PC-9 (cell line): ENCODE measurements at regions of chr2 and their contacts with region 1.

Region 1: DNA sequence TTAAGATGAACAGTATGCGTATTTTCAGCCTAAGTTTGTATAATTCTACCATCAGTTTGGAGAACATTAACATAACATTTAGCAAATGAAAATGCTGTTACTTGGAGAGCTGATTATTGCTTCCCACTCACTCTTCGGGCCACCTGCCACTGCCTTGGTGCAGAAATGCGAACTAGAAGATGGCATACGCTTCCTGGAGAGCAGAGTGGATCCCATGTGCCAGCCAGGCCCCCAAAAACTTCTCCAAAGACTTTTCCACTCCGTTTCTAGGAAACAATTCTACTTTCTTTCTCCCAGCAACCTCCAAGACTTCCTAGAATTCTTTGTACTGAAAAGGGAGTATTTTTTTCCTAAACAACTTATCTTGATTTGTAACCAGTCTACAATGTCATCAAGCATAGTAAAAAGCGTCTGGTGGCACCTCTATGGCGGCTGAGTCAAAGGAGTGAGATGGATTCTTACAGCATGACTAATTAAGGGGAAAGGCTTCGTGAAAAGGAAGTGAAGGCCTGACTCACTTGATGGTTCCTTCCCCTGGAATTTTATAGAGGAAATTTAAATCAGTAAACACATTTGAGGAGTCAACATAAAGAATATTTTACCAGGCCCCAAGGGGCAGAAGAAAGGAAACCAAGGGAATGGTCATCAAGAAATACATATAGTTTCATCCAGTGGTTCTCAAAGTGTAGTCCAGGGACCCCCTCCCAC is 36.6 kb downstream of the FEZ2 start:
- DNase-seq: peak; percentile 69 to 99
- H3K4me3 ChIP-seq: peak overlapping the region; percentile 30; the same call in 1 of the 2 replicates
- H3K27ac ChIP-seq: peak overlapping the region; percentile 99
- H3K4me1 ChIP-seq: peaks cover 49% of the 10 kb centered on the region
- H3K27me3 ChIP-seq: no peaks in the 10 kb centered on the region
- CTCF ChIP-seq: no peak

Region 2: DNA sequence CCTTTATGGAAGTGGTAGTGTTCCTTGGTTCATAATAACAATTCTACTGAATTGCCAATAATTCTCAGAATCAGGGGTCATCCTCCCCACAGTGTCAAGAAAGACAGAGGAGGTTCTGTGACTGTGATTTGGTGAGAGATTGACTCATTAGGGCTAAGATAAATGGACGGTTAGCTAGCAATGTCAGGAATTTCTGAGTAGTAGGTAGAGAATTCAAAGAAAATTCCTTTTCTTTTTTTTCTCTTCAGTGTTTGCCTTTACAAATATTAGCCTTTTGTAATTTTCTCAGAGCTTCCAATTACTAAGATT is 222.6 kb before region 1 on chr2:
- CTCF ChIA-PET with region 1: no interaction called
- POLR2A ChIA-PET with region 1: interaction called, 13 read pairs
- intact Hi-C with region 1: loop called (anchors 5 kb)
- DNase-seq: peak in 1 of 2 experiments; percentile 93
- H3K4me3 ChIP-seq: no peak overlapping the region
- H3K27ac ChIP-seq: peak overlapping the region; percentile 51
- H3K4me1 ChIP-seq: peaks cover 27% of the 10 kb centered on the region
- H3K27me3 ChIP-seq: no peaks in the 10 kb centered on the region
- CTCF ChIP-seq: no peak

Region 3: GRCh38 chr2:36376319-36376765 is 185.0 kb before region 1 on chr2:
- CTCF ChIA-PET with region 1: no interaction called
- POLR2A ChIA-PET with region 1: no interaction called
- intact Hi-C with region 1: loop called (anchors 5 kb)
- DNase-seq: peak; percentile 29 to 37
- H3K4me3 ChIP-seq: no peak overlapping the region
- H3K27ac ChIP-seq: peak overlapping the region; percentile 88
- H3K4me1 ChIP-seq: peaks cover 98% of the 10 kb centered on the region
- H3K27me3 ChIP-seq: no peaks in the 10 kb centered on the region
- CTCF ChIP-seq: no peak

Region 4: GRCh38 chr2:36486546-36487044 is 74.8 kb before region 1 on chr2:
- CTCF ChIA-PET with region 1: no interaction called
- POLR2A ChIA-PET with region 1: interaction called, 6 read pairs
- intact Hi-C with region 1: loop called (anchors 2 kb)
- DNase-seq: peak; percentile 15 to 89
- H3K4me3 ChIP-seq: no peak overlapping the region
- H3K27ac ChIP-seq: peak overlapping the region; percentile 42
- H3K4me1 ChIP-seq: peaks cover 72% of the 10 kb centered on the region
- H3K27me3 ChIP-seq: no peaks in the 10 kb centered on the region
- CTCF ChIP-seq: no peak

Region 5: GRCh38 chr2:36586672-36587071 is 25.3 kb after region 1 on chr2:
- CTCF ChIA-PET with region 1: no interaction called
- POLR2A ChIA-PET with region 1: interaction called, 14 read pairs
- intact Hi-C with region 1: no loop called
- DNase-seq: no peak
- H3K4me3 ChIP-seq: no peak overlapping the region
- H3K27ac ChIP-seq: no peak overlapping the region
- H3K4me1 ChIP-seq: no peaks in the 10 kb centered on the region
- H3K27me3 ChIP-seq: no peaks in the 10 kb centered on the region
- CTCF ChIP-seq: no peak

Region 6: GRCh38 chr2:36663851-36664695 is 102.7 kb after region 1 on chr2:
- CTCF ChIA-PET with region 1: interaction called, 8 read pairs
- POLR2A ChIA-PET with region 1: no interaction called
- intact Hi-C with region 1: loop called (anchors 5 kb)
- DNase-seq: peak; percentile 25 to 71
- H3K4me3 ChIP-seq: no peak overlapping the region
- H3K27ac ChIP-seq: no peak overlapping the region
- H3K4me1 ChIP-seq: peaks cover 18% of the 10 kb centered on the region
- H3K27me3 ChIP-seq: no peaks in the 10 kb centered on the region
- CTCF ChIP-seq: peak; percentile 94

Region 7: GRCh38 chr2:36966370-36967235 is 405.2 kb after region 1 on chr2 and contains the start of gene STRN:
- CTCF ChIA-PET with region 1: no interaction called
- POLR2A ChIA-PET with region 1: no interaction called
- intact Hi-C with region 1: no loop called
- DNase-seq: peak; percentile 85 to 98
- H3K4me3 ChIP-seq: peak within 1 kb of the TSS; percentile 83
- H3K27ac ChIP-seq: peak within 1 kb of the TSS; percentile 49; the same call in 1 of the 2 replicates
- H3K4me1 ChIP-seq: peaks cover 43% of the 10 kb centered on the region
- H3K27me3 ChIP-seq: no peaks in the 10 kb centered on the region
- CTCF ChIP-seq: no peak
- total RNA-seq, gene STRN: 33.5 and 37.6 TPM in 2 replicates